Naive thymus-derived CD4-positive, alpha-beta T cell (primary cell): ENCODE measurements at regions of chr22 and their contacts with region 1.

Region 1: DNA sequence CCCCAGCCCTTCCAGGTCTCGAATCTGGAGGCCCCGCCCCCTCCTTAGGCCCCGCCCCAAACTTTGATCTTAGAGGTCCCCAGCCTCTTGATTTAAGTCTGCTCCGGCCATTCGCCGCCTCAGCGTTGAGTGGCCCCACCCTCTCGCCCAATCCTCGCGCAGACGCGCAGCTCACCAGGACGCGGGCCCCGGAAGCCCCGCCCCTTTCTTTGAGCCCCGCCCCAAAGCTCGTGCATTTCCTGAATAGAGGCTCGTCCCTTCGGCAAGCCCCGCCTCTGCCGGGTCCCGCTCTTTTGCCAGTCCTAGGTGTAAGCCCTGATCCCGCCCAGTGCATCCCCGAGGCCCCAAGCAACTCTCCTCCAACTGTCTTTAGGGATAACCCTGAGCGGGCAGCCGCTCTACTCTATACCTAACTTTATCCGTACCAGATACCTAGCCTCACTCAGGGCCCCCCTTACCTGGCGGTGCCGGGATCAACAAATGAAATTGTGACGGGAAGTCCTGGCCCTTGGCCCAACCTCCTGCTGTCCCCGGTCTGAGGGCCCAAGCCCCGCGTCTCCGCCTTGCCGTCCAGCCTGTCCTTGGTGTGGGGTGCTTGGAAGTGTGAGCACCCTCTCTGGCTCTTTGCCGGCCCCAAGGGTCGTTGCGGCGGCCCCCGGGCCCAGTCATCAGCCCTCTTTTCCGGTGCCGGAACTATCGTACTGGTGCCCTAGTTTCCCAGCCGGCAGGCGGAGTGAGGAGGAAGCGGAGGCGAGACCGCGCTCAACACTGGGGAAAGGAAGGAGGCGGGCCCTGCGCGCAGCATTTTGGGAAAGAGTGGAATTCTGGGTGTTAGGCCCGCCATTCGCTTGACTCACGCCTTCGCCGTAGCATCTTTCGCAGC is at the start of gene SNRPD3:
- DNase-seq: peak; percentile 89 to 99 (median 96)
- ATAC-seq: peak; percentile 92
- H3K4me3 ChIP-seq: peak within 1 kb of the TSS; percentile 98
- H3K4me3 Mint-ChIP-seq: peak within 1 kb of the TSS; percentile 90 to 100 (median 98)
- H3K27ac ChIP-seq: peak within 1 kb of the TSS; percentile 92
- H3K27ac Mint-ChIP-seq: peak within 1 kb of the TSS; percentile 93 to 100 (median 98)
- H3K4me1 ChIP-seq: peaks cover 20 to 38% of the 10 kb centered on the region in 2 donors
- H3K4me1 Mint-ChIP-seq: peaks cover 39 to 80% (median 70%) of the 10 kb centered on the region in 7 donors
- H3K27me3 ChIP-seq: no peaks in the 10 kb centered on the region
- H3K27me3 Mint-ChIP-seq: no peaks in the 10 kb centered on the region
- total RNA-seq, gene SNRPD3: 47.5 to 94.5 (median 73.9) TPM

Region 2: GRCh38 chr22:23750714-23751440 is 804.5 kb before region 1 on chr22 and contains the start of gene ZNF70:
- CTCF ChIA-PET with region 1: no interaction called
- POLR2A ChIA-PET with region 1: no interaction called
- intact Hi-C with region 1: loop called in 1 of 2 experiments (anchors 10 kb)
- DNase-seq: peak; percentile 78 to 88 (median 86)
- ATAC-seq: peak; percentile 99
- H3K4me3 ChIP-seq: peak within 1 kb of the TSS; percentile 79
- H3K4me3 Mint-ChIP-seq: peak within 1 kb of the TSS; percentile 63 to 88 (median 82)
- H3K27ac ChIP-seq: peak within 1 kb of the TSS; percentile 73
- H3K27ac Mint-ChIP-seq: peak within 1 kb of the TSS; percentile 37 to 91 (median 76)
- H3K4me1 ChIP-seq: peaks cover 0 to 9% of the 10 kb centered on the region in 2 donors
- H3K4me1 Mint-ChIP-seq: peaks cover 11 to 18% (median 13%) of the 10 kb centered on the region in 7 donors
- H3K27me3 ChIP-seq: no peaks in the 10 kb centered on the region
- H3K27me3 Mint-ChIP-seq: no peaks in the 10 kb centered on the region
- total RNA-seq, gene ZNF70: 3.1 to 7.9 (median 4.0) TPM

Region 3: GRCh38 chr22:23893943-23894709 is 661.3 kb before region 1 on chr22 and contains the start of gene MIF:
- CTCF ChIA-PET with region 1: no interaction called
- POLR2A ChIA-PET with region 1: interaction called, 3 read pairs
- intact Hi-C with region 1: loop called in 1 of 2 experiments (anchors 1 kb)
- DNase-seq: peak; percentile 88 to 100 (median 94)
- ATAC-seq: peak; percentile 96
- H3K4me3 ChIP-seq: peak within 1 kb of the TSS; percentile 88
- H3K4me3 Mint-ChIP-seq: peak within 1 kb of the TSS; percentile 88 to 97 (median 94)
- H3K27ac ChIP-seq: peak within 1 kb of the TSS; percentile 93
- H3K27ac Mint-ChIP-seq: peak within 1 kb of the TSS; percentile 92 to 100 (median 97)
- H3K4me1 ChIP-seq: peaks cover 16% of the 10 kb centered on the region in 2 donors
- H3K4me1 Mint-ChIP-seq: peaks cover 12 to 39% (median 30%) of the 10 kb centered on the region in 7 donors
- H3K27me3 ChIP-seq: no peaks in the 10 kb centered on the region
- H3K27me3 Mint-ChIP-seq: no peaks in the 10 kb centered on the region
- total RNA-seq, gene MIF: 179 to 1,010 (median 197) TPM

Region 4: GRCh38 chr22:23938328-23939016 is 616.9 kb before region 1 on chr22:
- CTCF ChIA-PET with region 1: no interaction called
- POLR2A ChIA-PET with region 1: no interaction called
- intact Hi-C with region 1: no loop called
- DNase-seq: no peak
- ATAC-seq: no peak
- H3K4me3 ChIP-seq: no peak overlapping the region
- H3K4me3 Mint-ChIP-seq: no peak overlapping the region
- H3K27ac ChIP-seq: no peak overlapping the region
- H3K27ac Mint-ChIP-seq: no peak overlapping the region
- H3K4me1 ChIP-seq: no peaks in the 10 kb centered on the region
- H3K4me1 Mint-ChIP-seq: peaks cover 0 to 3% (median 0%) of the 10 kb centered on the region in 7 donors
- H3K27me3 ChIP-seq: no peaks in the 10 kb centered on the region
- H3K27me3 Mint-ChIP-seq: peaks cover 0 to 13% (median 3%) of the 10 kb centered on the region in 5 donors

Region 5: DNA sequence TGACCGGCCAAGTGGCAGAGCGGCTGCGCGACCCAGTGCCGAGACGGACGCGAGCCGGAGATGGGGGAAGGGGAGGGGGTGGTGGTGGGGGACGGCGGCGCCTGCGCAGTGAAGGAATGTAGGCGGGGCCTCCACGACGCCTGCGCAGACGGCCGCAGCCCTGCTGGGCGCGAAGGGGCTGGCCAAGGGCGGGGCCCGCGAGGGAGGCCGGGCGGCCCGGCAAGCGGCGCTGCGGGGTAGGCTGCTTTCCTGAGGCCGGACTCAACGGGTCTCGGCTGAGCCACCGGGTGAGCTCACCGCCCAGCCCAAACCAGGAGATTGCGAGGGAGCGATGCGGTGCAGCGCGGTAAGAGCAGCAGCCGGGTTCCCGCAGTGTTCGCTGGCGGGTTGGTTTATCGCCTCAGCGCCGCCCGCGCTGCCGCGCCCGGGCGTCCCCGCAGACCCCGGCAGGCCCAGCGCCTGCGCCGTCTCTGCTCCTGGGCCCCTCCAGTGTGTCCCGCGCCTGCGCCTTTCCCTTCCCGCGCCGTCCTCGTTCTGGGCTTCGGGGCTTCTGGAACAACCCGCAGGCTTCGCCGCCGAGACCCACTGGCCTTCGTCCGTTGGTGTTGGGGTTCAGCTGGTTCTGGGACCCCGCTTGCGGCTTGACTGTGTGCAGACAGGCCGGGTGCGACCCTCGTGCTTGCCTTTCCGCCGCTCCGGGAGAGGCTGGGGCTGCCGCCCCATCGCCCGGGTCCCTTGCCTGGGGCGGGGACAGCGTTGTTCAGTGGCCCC is 284.6 kb before region 1 on chr22 and contains the start of gene SPECC1L:
- CTCF ChIA-PET with region 1: no interaction called
- POLR2A ChIA-PET with region 1: no interaction called
- intact Hi-C with region 1: loop called (anchors 1 to 2 kb)
- DNase-seq: peak; percentile 85 to 98 (median 92)
- ATAC-seq: peak; percentile 97
- H3K4me3 ChIP-seq: peak within 1 kb of the TSS; percentile 87
- H3K4me3 Mint-ChIP-seq: peak within 1 kb of the TSS; percentile 85 to 91 (median 88)
- H3K27ac ChIP-seq: peak within 1 kb of the TSS; percentile 88
- H3K27ac Mint-ChIP-seq: peak within 1 kb of the TSS; percentile 70 to 93 (median 87)
- H3K4me1 ChIP-seq: peaks cover 6 to 11% of the 10 kb centered on the region in 2 donors
- H3K4me1 Mint-ChIP-seq: peaks cover 23 to 47% (median 39%) of the 10 kb centered on the region in 7 donors
- H3K27me3 ChIP-seq: no peaks in the 10 kb centered on the region
- H3K27me3 Mint-ChIP-seq: no peaks in the 10 kb centered on the region
- total RNA-seq, gene SPECC1L: 39.5 to 69.0 (median 51.3) TPM

Region 6: DNA sequence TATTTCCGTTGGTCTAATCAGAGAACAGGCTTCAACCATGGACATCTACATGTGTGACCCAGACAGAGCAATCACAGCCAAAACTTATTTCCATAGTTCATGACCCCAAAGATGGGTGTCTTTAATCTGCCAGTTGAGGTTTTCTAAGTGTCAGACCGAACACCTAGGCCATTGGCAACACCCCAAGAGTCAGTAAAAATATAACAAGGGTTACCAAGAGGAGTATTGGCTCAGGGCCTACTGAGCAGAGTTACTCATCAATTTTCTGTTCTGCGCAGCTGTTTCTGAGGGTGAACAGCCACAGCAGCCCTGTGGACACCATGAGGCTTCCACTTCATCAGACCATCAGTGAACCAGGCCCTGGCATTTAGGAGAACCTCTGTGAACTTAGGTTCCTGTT is 19.3 kb before region 1 on chr22:
- CTCF ChIA-PET with region 1: no interaction called
- POLR2A ChIA-PET with region 1: no interaction called
- intact Hi-C with region 1: no loop called
- DNase-seq: no peak
- ATAC-seq: no peak
- H3K4me3 ChIP-seq: no peak overlapping the region
- H3K4me3 Mint-ChIP-seq: no peak overlapping the region
- H3K27ac ChIP-seq: no peak overlapping the region
- H3K27ac Mint-ChIP-seq: no peak overlapping the region
- H3K4me1 ChIP-seq: no peaks in the 10 kb centered on the region
- H3K4me1 Mint-ChIP-seq: no peaks in the 10 kb centered on the region
- H3K27me3 ChIP-seq: no peaks in the 10 kb centered on the region
- H3K27me3 Mint-ChIP-seq: no peaks in the 10 kb centered on the region

Region 7: GRCh38 chr22:24583221-24584165 is 28.1 kb after region 1 on chr22:
- CTCF ChIA-PET with region 1: no interaction called
- POLR2A ChIA-PET with region 1: no interaction called
- intact Hi-C with region 1: no loop called
- DNase-seq: no peak
- ATAC-seq: no peak
- H3K4me3 ChIP-seq: no peak overlapping the region
- H3K4me3 Mint-ChIP-seq: no peak overlapping the region
- H3K27ac ChIP-seq: no peak overlapping the region
- H3K27ac Mint-ChIP-seq: no peak overlapping the region
- H3K4me1 ChIP-seq: no peaks in the 10 kb centered on the region
- H3K4me1 Mint-ChIP-seq: peaks cover 0 to 6% (median 0%) of the 10 kb centered on the region in 7 donors
- H3K27me3 ChIP-seq: no peaks in the 10 kb centered on the region
- H3K27me3 Mint-ChIP-seq: no peaks in the 10 kb centered on the region

Region 8: DNA sequence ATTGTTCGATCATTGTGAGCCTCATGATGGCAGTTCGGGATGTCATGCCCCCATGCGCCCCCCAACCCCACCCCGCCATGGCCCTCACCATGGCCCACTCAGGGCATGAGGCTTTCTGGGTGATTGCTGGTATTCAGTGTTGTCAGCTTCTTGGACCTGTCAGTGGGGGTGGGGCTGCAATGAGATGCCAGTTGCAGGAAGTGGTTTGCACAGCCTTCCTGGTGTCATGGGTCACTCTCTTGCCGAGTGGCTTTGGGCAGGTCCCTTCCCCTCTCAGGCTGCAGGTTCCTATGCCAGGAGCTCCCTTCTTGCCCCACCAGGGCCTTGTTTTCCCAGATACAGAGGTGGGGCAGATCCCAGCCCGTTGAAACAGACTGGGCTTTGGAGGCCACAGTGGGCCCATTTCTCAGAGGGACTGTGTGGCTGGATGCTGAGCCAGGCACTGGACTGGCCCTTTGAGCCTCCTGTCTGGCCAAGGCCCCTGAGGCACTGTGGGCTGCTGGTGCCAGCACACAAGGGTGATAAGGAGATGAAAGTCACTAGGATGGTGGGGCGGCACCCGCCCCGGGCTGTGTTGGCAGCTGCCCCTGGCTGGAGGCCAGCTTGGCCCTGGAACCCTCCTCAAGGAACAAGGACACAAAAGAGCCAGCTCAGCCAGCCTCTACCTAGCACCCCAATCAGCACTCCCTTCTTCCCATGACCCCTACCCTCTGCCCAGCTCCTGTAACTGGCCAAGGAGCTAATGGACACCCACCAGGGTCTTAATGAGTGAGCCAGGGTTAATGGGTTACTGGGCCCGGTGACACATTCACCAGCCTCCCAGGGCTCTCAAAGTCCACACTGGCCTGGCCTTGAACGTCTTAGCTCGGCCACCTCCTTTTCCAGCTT is 46.1 kb after region 1 on chr22:
- CTCF ChIA-PET with region 1: no interaction called
- POLR2A ChIA-PET with region 1: no interaction called
- intact Hi-C with region 1: loop called in 1 of 2 experiments (anchors 10 kb)
- DNase-seq: no peak
- ATAC-seq: peak; percentile 60
- H3K4me3 ChIP-seq: no peak overlapping the region
- H3K4me3 Mint-ChIP-seq: peak overlapping the region in 2 of 10 donors; percentile 28 to 58
- H3K27ac ChIP-seq: no peak overlapping the region
- H3K27ac Mint-ChIP-seq: peak overlapping the region in 2 of 9 donors; percentile 38 to 67
- H3K4me1 ChIP-seq: peaks cover 0 to 8% of the 10 kb centered on the region in 2 donors
- H3K4me1 Mint-ChIP-seq: peaks cover 14 to 40% (median 19%) of the 10 kb centered on the region in 7 donors
- H3K27me3 ChIP-seq: no peaks in the 10 kb centered on the region
- H3K27me3 Mint-ChIP-seq: no peaks in the 10 kb centered on the region

Region 9: DNA sequence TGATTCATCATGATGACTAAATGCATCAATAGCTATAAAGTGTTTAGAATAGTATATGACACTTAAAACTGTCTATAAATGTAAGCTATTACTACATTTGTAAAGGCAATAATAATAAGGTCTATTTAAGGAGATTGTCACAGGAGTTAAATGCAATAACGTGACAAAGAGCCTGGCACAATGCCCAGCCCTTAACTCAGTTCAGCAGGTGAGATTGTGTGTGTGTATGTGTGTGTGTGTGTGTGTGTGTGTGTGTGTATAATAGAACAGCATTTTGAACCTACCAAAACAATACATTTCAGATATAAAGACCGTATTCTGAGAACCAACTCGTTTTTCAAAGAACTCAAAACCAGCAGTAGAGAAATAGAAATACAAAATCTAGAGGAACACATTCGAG is 1364.1 kb after region 1 on chr22:
- CTCF ChIA-PET with region 1: no interaction called
- POLR2A ChIA-PET with region 1: no interaction called
- intact Hi-C with region 1: no loop called
- DNase-seq: no peak
- ATAC-seq: no peak
- H3K4me3 ChIP-seq: no peak overlapping the region
- H3K4me3 Mint-ChIP-seq: no peak overlapping the region
- H3K27ac ChIP-seq: no peak overlapping the region
- H3K27ac Mint-ChIP-seq: no peak overlapping the region
- H3K4me1 ChIP-seq: no peaks in the 10 kb centered on the region
- H3K4me1 Mint-ChIP-seq: no peaks in the 10 kb centered on the region
- H3K27me3 ChIP-seq: peaks cover 0 to 9% of the 10 kb centered on the region in 2 donors
- H3K27me3 Mint-ChIP-seq: peaks cover 10 to 70% (median 48%) of the 10 kb centered on the region in 5 donors

Region 10: GRCh38 chr22:26483439-26484359 is 1928.3 kb after region 1 on chr22 and contains the starts of genes HPS4 and SRRD:
- CTCF ChIA-PET with region 1: no interaction called
- POLR2A ChIA-PET with region 1: no interaction called
- intact Hi-C with region 1: loop called in 1 of 2 experiments (anchors 10 kb)
- DNase-seq: peak; percentile 90 to 99 (median 94)
- ATAC-seq: peak; percentile 93
- H3K4me3 ChIP-seq: peak within 1 kb of the TSS; percentile 61
- H3K4me3 Mint-ChIP-seq: peak within 1 kb of the TSS; percentile 75 to 97 (median 93)
- H3K27ac ChIP-seq: peak within 1 kb of the TSS; percentile 95
- H3K27ac Mint-ChIP-seq: peak within 1 kb of the TSS; percentile 93 to 99 (median 98)
- H3K4me1 ChIP-seq: peaks cover 17 to 48% of the 10 kb centered on the region in 2 donors
- H3K4me1 Mint-ChIP-seq: peaks cover 47 to 77% (median 68%) of the 10 kb centered on the region in 7 donors
- H3K27me3 ChIP-seq: no peaks in the 10 kb centered on the region
- H3K27me3 Mint-ChIP-seq: no peaks in the 10 kb centered on the region
- total RNA-seq, gene HPS4: 45.5 to 64.3 (median 59.1) TPM
- total RNA-seq, gene SRRD: 18.9 to 22.8 (median 20.1) TPM